Posterior vena cava (tissue), 2 donors: ENCODE measurements at regions of chr17 and their contacts with region 1.

Region 1: GRCh38 chr17:3636154-3636907 is at the starts of genes CTNS and SHPK:
- DNase-seq: peak; percentile 99
- total RNA-seq, gene CTNS: 9.2 to 11.7 TPM
- total RNA-seq, gene SHPK: 6.1 to 13.3 TPM

Region 2: GRCh38 chr17:3535253-3535995 is 100.9 kb before region 1 on chr17:
- intact Hi-C with region 1: loop called in 1 of 2 experiments (anchors 10 kb)
- DNase-seq: peak; percentile 90

Region 3: DNA sequence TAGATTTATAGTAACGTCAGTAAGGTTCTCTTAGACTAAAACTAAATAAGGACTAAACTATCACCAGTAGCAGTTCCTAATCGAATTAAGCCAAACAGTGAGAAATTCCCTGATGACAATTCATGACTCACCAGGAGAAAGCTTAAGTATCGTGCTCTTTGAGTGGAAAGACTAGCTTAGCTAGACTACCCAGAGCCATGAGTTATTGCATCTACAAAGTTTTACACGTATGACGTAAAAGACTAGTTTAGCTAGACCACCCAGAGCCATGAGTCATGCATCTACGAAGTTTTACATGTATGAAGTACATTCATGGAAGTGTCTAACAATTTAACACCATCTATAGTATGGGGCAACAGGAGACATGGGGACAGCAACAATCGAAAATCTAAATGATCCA is 693.5 kb after region 1 on chr17:
- intact Hi-C with region 1: no loop called
- DNase-seq: no peak